GM13977 (cell line): ENCODE measurements at regions of chr6 and their contacts with region 1.

Region 1: DNA sequence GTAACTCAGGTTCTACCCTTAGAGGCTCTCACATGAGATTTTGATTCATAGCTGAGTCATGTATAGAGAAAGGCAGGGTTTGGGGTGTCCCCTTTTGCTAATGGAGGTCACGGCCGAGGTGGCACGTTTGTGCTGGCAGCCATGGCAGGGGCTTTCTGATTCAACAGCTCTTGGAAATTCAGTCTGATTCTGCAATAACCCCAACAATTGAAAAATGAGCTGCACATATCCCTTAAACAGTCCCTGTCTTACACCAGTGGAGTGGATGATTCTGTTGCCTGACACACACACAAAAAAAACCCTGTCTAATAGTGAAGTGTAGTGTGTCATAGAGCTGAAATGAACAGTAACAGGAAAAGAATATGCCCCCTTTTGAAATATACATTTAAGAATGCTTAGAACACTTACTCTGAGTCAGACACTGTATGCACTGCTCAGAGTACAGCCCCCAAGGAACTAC is 40.4 kb upstream of the ARG1 start:
- DNase-seq: peak; percentile 50
- CTCF ChIP-seq: no peak

Region 2: GRCh38 chr6:131199568-131200272 is 332.9 kb before region 1 on chr6:
- in situ Hi-C with region 1: loop called (anchors 25 kb)
- DNase-seq: peak; percentile 66
- CTCF ChIP-seq: peak; percentile 84

Region 3: DNA sequence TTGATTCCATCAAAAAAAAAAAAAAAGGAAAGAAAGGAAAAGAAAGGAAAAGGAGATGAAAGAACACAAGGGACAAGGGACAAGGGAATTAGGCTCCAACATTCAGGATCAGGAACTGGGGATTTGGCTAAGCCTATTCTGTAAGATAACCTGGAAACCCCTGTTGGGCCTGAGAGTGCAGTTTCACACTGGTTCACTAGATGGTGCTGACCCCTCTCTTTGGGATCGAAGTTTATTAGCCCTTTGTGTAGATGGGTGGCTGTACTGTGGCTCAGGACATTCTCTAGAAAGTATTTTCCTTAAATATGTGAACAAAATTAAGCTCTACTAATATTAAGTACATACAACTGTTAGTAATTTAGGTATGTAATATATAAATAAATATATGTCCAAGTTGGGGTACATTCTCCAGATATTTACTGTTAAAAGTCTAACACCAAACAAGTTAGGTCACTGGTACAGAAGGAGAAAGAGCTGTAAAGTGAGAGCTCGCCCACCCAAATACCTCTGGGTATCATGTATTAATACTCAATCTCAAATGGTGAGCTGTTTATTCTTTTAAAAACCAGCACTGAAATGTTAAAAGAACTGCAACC is 162.3 kb after region 1 on chr6:
- in situ Hi-C with region 1: no loop called
- DNase-seq: peak; percentile 60
- CTCF ChIP-seq: peak; percentile 70